ENCODE measurements at regions of chr9 and their contacts with region 1.

Region 1: GRCh38 chr9:120842690-120843499 is at the start of gene PSMD5:
- DNase-seq: peak; percentile 98 to 99
- ATAC-seq: peak; percentile 97 to 99 (median 98)
- H3K4me3 ChIP-seq: peak within 1 kb of the TSS; percentile 92
- H3K27ac ChIP-seq: peak within 1 kb of the TSS; percentile 87
- H3K4me1 ChIP-seq: peaks cover 8% of the 10 kb centered on the region
- H3K27me3 ChIP-seq: no peaks in the 10 kb centered on the region
- CTCF ChIP-seq: no peak
- total RNA-seq, gene PSMD5: 7.6 to 15.7 (median 15.0) TPM

Region 2: DNA sequence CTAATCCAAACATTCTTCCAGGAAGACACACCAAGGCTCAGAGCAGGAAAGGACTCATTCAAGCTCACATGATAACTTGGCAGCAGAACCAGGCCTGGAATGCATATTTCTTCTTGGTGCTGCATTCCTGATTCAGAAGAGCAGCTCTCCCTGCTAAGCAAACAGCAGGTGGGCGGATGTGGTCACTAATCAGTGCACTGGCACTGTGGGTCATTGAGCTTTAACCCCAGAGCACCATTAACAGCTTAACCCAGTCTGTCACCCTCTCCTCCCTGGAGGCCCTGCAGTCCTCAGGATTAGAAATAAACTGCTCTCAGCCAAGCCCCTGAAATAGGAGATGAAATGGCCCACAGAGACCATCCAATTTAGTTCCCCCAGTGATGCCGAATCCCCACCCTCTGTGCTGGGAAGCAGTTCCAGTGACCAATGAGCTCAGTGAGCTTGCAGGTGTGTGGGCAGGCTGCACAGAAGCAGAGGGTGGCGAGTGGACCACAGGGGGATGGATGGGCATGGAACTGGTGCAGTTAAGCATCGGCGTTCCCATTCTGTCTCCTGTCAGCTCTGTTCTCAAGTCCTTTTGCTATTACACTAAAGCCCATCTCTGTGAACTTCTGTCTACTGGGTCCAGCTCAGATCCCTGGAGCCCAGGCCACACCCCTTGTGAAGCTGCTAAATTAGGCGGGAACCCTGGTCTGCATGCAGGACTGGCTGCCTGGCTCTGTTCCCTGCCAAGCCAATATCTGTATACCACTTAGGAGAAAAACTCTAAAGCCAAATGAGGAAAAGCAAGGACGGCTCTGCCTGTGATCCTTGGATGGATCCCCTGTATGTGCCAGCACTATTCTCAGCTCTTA is 112.0 kb before region 1 on chr9:
- intact Hi-C with region 1: no loop called
- DNase-seq: peak in 1 of 2 donors; percentile 24
- ATAC-seq: peak in 3 of 4 donors; percentile 23 to 50 (median 42)
- H3K4me3 ChIP-seq: no peak overlapping the region
- H3K27ac ChIP-seq: no peak overlapping the region
- H3K4me1 ChIP-seq: no peaks in the 10 kb centered on the region
- H3K27me3 ChIP-seq: no peaks in the 10 kb centered on the region
- CTCF ChIP-seq: no peak

Region 3: GRCh38 chr9:120792898-120793765 is 49.8 kb before region 1 on chr9 and contains the start of gene FBXW2:
- intact Hi-C with region 1: loop called in 1 of 2 experiments (anchors 5 kb)
- DNase-seq: peak; percentile 93 to 96
- ATAC-seq: peak; percentile 100
- H3K4me3 ChIP-seq: peak within 1 kb of the TSS; percentile 85
- H3K27ac ChIP-seq: peak within 1 kb of the TSS; percentile 90
- H3K4me1 ChIP-seq: peaks cover 33% of the 10 kb centered on the region
- H3K27me3 ChIP-seq: no peaks in the 10 kb centered on the region
- CTCF ChIP-seq: no peak
- total RNA-seq, gene FBXW2: 22.6 to 36.8 (median 26.4) TPM